ENCODE measurements at regions of chr9 and their contacts with region 1.

Region 1: GRCh38 chr9:91101611-91102168 is 260.0 kb downstream of the AUH start:
- DNase-seq: peak; percentile 85
- ATAC-seq: peak; percentile 88
- H3K4me3 Mint-ChIP-seq: peak overlapping the region; percentile 80
- H3K27ac Mint-ChIP-seq: peak overlapping the region; percentile 90
- H3K4me1 Mint-ChIP-seq: peaks cover 49% of the 10 kb centered on the region
- H3K27me3 Mint-ChIP-seq: no peaks in the 10 kb centered on the region

Region 2: DNA sequence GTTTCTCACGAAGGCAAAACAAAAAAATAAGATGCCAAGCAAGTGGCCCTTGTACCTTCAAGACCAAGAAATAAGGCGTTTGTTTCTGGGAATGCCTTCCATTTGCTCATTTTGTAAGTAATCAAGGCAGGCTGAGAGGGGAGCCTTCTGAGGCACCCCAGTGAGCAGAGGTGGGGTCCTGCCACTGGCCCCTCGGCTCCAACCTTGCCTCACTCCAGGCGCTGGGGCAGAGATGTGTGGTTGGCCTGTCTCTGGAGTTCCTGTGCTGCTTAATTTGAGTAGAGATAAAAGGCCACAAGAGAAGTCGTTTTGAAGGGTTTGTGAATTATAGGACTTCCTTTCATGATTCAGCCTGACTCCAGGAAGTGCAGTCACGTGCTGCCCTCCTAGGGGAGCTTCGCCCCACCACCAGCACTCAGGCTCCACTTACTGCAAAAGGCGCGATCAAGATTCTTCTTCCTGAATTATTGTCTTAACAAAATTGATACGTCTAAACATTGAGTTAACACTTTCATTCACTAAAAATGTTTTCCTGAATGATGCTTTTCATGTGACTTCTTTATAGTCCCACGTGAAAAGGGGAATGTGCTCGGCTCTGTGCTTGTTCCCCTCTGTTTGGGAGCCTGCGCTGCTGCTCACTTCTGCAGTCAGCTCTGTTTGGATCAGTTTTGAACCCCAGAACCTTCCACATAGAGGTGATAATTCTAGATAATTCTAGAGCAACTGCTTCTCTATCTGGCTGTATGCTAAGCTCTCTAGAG is 286.3 kb before region 1 on chr9:
- POLR2A ChIA-PET with region 1: no interaction called
- DNase-seq: no peak
- ATAC-seq: no peak
- H3K4me3 Mint-ChIP-seq: peak overlapping the region; percentile 18
- H3K27ac Mint-ChIP-seq: no peak overlapping the region
- H3K4me1 Mint-ChIP-seq: peaks cover 10% of the 10 kb centered on the region
- H3K27me3 Mint-ChIP-seq: peaks cover 11% of the 10 kb centered on the region

Region 3: DNA sequence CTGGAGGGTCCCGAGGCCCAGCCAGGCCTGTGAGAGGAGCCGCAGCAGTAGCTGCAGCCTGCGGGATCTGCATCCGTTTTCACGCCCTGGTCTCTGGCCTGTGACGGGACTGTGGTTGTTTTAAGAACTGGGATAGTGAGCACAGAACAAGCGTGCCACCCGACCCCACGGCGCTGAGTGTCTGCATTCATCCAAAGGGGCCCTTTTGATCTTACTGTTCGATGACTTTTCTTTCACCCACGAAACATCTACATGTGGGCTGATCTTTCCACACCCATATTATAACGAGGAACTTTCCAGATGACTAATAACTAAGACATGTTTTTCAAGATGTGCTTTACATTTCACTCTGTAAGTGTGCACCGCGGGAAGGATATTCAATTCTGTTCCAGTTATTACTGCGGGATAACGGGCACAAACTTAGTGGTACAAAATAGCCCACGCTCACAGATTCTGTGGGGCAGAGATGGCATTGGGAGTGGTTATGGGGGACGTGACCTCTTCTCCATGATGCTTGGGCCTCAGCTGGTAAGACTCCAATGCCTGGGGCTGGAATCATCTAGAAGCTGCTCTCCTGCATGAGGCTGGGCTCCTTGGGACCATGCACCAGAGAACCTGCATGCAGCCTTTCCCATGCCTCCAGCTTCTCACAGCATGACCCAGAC is 135.1 kb before region 1 on chr9:
- POLR2A ChIA-PET with region 1: no interaction called
- DNase-seq: no peak
- ATAC-seq: no peak
- H3K4me3 Mint-ChIP-seq: no peak overlapping the region
- H3K27ac Mint-ChIP-seq: no peak overlapping the region
- H3K4me1 Mint-ChIP-seq: no peaks in the 10 kb centered on the region
- H3K27me3 Mint-ChIP-seq: peaks cover 10% of the 10 kb centered on the region

Region 4: GRCh38 chr9:91060503-91061343 is 41.0 kb before region 1 on chr9:
- POLR2A ChIA-PET with region 1: no interaction called
- DNase-seq: no peak
- ATAC-seq: no peak
- H3K4me3 Mint-ChIP-seq: no peak overlapping the region
- H3K27ac Mint-ChIP-seq: no peak overlapping the region
- H3K4me1 Mint-ChIP-seq: peaks cover 17% of the 10 kb centered on the region
- H3K27me3 Mint-ChIP-seq: peaks cover 6% of the 10 kb centered on the region

Region 5: GRCh38 chr9:91111876-91112275 is 10.2 kb after region 1 on chr9:
- POLR2A ChIA-PET with region 1: interaction called, 10 read pairs
- DNase-seq: no peak
- ATAC-seq: no peak
- H3K4me3 Mint-ChIP-seq: no peak overlapping the region
- H3K27ac Mint-ChIP-seq: no peak overlapping the region
- H3K4me1 Mint-ChIP-seq: peaks cover 27% of the 10 kb centered on the region
- H3K27me3 Mint-ChIP-seq: peaks cover 10% of the 10 kb centered on the region

Region 6: DNA sequence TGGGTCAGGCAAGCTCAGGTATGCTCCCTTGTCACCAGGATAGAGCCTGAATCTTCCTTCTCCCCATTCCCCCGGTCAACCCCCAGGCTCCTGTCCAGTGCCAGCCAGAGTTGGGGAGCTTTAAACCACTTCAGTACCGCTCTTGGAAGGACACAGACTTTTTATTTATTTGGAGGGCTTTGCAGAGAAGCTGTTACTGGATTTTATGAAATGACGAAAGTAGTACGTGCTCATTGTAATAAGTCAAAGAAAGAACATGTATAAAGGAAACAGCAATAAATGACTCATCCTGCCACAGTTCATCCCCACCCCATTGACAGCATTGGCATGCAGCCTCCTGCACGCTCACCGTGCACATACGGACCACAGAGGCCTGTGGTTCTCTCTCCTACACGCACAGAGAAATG is 29.7 kb after region 1 on chr9:
- POLR2A ChIA-PET with region 1: interaction called, 10 read pairs
- DNase-seq: peak; percentile 71
- ATAC-seq: peak; percentile 100
- H3K4me3 Mint-ChIP-seq: peak overlapping the region; percentile 72
- H3K27ac Mint-ChIP-seq: peak overlapping the region; percentile 98
- H3K4me1 Mint-ChIP-seq: peaks cover 26% of the 10 kb centered on the region
- H3K27me3 Mint-ChIP-seq: no peaks in the 10 kb centered on the region

Region 7: GRCh38 chr9:91150998-91151717 is 49.5 kb after region 1 on chr9:
- POLR2A ChIA-PET with region 1: interaction called, 38 read pairs
- DNase-seq: no peak
- ATAC-seq: peak; percentile 89
- H3K4me3 Mint-ChIP-seq: peak overlapping the region; percentile 53
- H3K27ac Mint-ChIP-seq: peak overlapping the region; percentile 88
- H3K4me1 Mint-ChIP-seq: peaks cover 70% of the 10 kb centered on the region
- H3K27me3 Mint-ChIP-seq: no peaks in the 10 kb centered on the region

Region 8: DNA sequence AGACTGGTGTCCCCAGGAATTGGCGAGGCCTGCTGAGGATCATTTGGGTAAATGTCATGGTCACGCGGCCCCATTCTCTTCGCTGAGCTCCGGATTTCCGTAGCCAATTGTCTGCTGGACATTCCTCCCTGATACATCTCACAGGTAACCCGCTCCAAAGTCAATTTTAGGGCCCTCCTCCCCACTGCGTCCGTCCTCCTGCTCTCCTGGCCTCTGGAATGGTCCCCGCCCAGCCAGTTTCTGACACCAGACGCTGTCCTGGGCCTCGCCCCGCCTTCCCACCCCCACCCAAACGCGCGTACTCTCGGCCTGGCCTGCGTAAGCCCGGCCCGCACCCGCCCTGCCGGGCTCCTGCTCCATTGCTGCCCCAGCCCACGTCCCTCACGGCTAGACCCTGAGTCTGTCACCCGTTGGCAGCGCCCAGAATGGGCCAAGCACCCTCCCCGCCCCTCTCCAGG is 58.0 kb after region 1 on chr9:
- POLR2A ChIA-PET with region 1: interaction called, 10 read pairs
- DNase-seq: no peak
- ATAC-seq: no peak
- H3K4me3 Mint-ChIP-seq: no peak overlapping the region
- H3K27ac Mint-ChIP-seq: peak overlapping the region; percentile 58
- H3K4me1 Mint-ChIP-seq: peaks cover 57% of the 10 kb centered on the region
- H3K27me3 Mint-ChIP-seq: no peaks in the 10 kb centered on the region

Region 9: GRCh38 chr9:91422758-91423711 is 321.3 kb after region 1 on chr9:
- POLR2A ChIA-PET with region 1: interaction called, 20 read pairs
- DNase-seq: peak; percentile 79
- ATAC-seq: peak; percentile 48
- H3K4me3 Mint-ChIP-seq: peak overlapping the region; percentile 90
- H3K27ac Mint-ChIP-seq: peak overlapping the region; percentile 77
- H3K4me1 Mint-ChIP-seq: peaks cover 47% of the 10 kb centered on the region
- H3K27me3 Mint-ChIP-seq: peaks cover 7% of the 10 kb centered on the region

Measured in activated naive CD8-positive, alpha-beta T cell treated with anti-CD3 and anti-CD28 coated beads, Interleukin-2, amount 10 ng/mL, durations not matched to agents 7 days and 5 days (primary cell).